Dorsolateral prefrontal cortex (tissue), 120 donors: ENCODE measurements at regions of chr10 and their contacts with region 1.

Region 1: GRCh38 chr10:78756604-78757349 is 312.0 kb upstream of the ZMIZ1 start:
- DNase-seq: peak in 9 of 10 donors; percentile 45 to 91 (median 74)
- H3K4me3 ChIP-seq: no peak overlapping the region
- H3K27ac ChIP-seq: peak overlapping the region in 44 of 59 donors; percentile 2 to 76 (median 56)
- H3K27me3 ChIP-seq: no peaks in the 10 kb centered on the region
- CTCF ChIP-seq: peak in 8 of 56 donors; percentile 6 to 39 (median 18)

Region 2: DNA sequence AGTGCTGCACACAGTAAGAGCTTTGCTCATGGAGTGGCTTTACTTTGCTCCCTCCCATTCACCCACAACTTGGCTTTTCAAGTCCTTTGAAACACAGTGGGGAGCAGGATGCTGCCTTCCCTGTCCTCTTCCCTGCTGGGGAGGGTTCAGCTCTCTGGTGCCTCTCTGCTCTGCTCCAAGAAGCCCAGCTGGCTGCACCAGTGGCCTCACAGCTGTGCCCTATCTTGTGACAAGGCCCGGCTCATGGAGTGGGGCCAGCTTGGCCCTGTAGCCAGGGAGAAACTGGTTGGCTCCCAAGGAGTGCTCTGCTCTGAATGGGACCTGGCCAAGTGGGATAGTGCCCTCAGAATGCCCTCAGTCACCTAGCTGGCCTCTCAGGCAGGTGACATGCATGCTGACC is 99.6 kb after region 1 on chr10:
- intact Hi-C with region 1: loop called in 1 of 2 experiments (anchors 5 kb)
- DNase-seq: peak; percentile 19 to 93 (median 88)
- H3K4me3 ChIP-seq: no peak overlapping the region
- H3K27ac ChIP-seq: peak overlapping the region in 1 of 59 donors; percentile 29
- H3K27me3 ChIP-seq: no peaks in the 10 kb centered on the region
- CTCF ChIP-seq: peak in 12 of 56 donors; percentile 10 to 45 (median 24)

Region 3: DNA sequence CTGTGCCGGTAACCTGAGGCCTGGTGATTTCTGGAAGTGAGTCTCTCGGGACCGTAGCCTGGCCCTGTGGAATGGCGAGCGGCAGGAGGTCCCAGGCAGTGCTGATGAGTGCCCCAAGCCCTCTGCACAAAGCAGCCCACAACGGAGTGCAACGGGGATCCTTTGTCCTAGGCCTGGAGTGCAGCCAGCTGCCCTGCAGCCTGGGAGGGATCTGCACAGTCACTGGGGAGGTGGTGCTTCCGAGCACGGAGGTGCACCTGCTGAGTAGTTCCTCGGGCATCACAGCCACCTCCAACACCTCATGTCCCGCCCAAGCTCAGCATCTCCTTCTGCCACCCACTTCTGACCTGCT is 149.2 kb after region 1 on chr10:
- intact Hi-C with region 1: no loop called
- DNase-seq: peak in 2 of 10 donors; percentile 53 to 59
- H3K4me3 ChIP-seq: no peak overlapping the region
- H3K27ac ChIP-seq: no peak overlapping the region
- H3K27me3 ChIP-seq: no peaks in the 10 kb centered on the region
- CTCF ChIP-seq: no peak